Activated CD4-positive, alpha-beta T cell treated with anti-CD3 and anti-CD28 coated beads for 36 hours (primary cell): ENCODE measurements at regions of chr17 and their contacts with region 1.

Region 1: GRCh38 chr17:76271669-76272540 is 6.8 kb downstream of the UBALD2 start:
- DNase-seq: peak; percentile 95
- ATAC-seq: peak; percentile 57
- H3K4me3 Mint-ChIP-seq: peak overlapping the region; percentile 96
- H3K27ac Mint-ChIP-seq: peak overlapping the region; percentile 98
- H3K4me1 Mint-ChIP-seq: peaks cover 70% of the 10 kb centered on the region
- H3K27me3 Mint-ChIP-seq: no peaks in the 10 kb centered on the region

Region 2: GRCh38 chr17:75749545-75750389 is 522.1 kb before region 1 on chr17:
- CTCF ChIA-PET with region 1: no interaction called
- POLR2A ChIA-PET with region 1: no interaction called
- intact Hi-C with region 1: no loop called
- DNase-seq: peak; percentile 95
- ATAC-seq: peak; percentile 75
- H3K4me3 Mint-ChIP-seq: no peak overlapping the region
- H3K27ac Mint-ChIP-seq: no peak overlapping the region
- H3K4me1 Mint-ChIP-seq: peaks cover 18% of the 10 kb centered on the region
- H3K27me3 Mint-ChIP-seq: no peaks in the 10 kb centered on the region

Region 3: DNA sequence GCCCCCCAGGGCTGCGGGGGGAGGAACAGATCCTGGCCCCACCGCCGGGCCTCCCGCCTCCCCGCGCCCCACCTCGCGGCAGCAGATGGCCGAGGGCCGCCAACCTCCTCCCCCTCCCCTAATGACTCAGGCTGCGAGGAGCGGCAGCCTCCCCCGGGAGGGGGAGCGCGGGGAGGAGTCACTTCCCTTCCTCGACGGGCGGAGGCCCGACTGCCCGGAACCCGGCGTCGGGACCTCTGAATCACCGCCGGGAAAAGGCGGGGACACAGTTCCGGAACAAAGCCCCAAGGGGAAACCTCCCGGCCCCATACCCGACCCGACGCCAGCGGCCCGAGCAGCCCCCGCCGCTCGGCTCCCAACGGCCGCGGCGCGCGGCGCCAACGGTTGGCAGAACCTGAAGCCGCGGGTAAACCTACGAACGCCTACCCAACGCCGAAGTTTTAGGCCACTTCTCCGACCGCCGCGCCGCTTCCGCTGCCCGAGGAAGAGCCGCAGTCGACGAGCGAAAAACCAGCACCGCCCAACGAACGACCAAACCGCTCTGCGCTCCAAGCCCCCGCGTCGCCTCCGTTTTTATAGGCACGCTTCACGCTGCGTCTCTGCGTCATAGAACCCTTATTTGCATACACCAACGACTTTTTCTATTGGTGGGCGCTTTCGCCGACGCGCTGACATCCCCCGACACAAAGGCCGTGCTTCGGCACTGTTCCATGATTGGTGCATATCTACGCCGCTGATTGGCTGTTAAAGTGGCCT is 492.5 kb before region 1 on chr17:
- CTCF ChIA-PET with region 1: no interaction called
- POLR2A ChIA-PET with region 1: interaction called, 4 read pairs
- intact Hi-C with region 1: loop called (anchors 2 to 5 kb)
- DNase-seq: peak; percentile 96
- ATAC-seq: peak; percentile 69
- H3K4me3 Mint-ChIP-seq: peak overlapping the region; percentile 98
- H3K27ac Mint-ChIP-seq: peak overlapping the region; percentile 99
- H3K4me1 Mint-ChIP-seq: peaks cover 46% of the 10 kb centered on the region
- H3K27me3 Mint-ChIP-seq: peaks cover 1% of the 10 kb centered on the region

Region 4: DNA sequence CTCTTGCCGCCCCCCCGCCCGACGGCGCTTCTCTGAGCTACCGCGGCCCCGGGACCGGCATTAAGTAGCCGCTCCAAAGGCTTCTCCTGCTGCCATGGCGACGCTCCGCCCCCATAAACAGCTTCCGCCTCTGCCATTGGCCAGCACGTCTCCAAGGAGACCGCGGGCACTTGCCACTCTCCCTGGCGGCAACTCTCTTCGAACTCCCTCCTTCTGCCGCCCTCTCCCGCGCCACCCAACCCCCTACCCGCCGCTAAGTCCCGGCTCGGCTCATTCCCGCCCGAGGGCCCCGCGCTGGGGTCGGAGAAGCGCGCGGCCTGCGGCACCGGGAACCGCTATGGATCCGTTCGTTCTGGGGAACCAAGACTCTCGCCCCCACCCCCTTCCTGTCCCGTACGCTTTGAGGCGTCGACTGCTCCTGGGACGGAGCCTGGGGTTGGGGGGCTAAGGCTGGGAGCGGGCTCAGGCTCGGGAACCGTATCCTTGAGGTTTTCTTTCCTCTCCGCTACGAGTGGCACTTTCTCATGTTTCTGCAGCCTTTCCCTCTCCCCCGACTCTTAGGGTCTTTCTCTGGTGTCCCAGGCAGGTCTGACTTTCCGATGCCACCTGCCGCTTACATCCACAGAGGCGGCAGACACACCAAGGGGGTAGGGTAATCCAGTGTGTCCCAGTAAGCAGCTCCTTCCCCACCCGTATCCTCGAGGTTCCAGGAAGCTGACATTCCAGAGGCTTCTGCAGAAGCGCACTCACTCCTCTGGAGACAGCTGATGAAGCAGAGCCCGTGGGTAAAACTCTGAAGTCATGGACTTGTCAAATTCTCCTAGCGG is 130.5 kb before region 1 on chr17 and contains the start of gene FOXJ1:
- CTCF ChIA-PET with region 1: interaction called, 3 read pairs
- POLR2A ChIA-PET with region 1: interaction called, 3 read pairs
- intact Hi-C with region 1: loop called in 1 of 2 experiments (anchors 1 kb)
- DNase-seq: peak; percentile 93
- ATAC-seq: peak; percentile 80
- H3K4me3 Mint-ChIP-seq: peak within 1 kb of the TSS; percentile 64
- H3K27ac Mint-ChIP-seq: no peak within 1 kb of the TSS
- H3K4me1 Mint-ChIP-seq: peaks cover 51% of the 10 kb centered on the region
- H3K27me3 Mint-ChIP-seq: peaks cover 9% of the 10 kb centered on the region
- total RNA-seq, gene FOXJ1: 0.47 to 0.53 TPM

Region 5: GRCh38 chr17:76191896-76192295 is 80.0 kb before region 1 on chr17:
- CTCF ChIA-PET with region 1: interaction called, 9 read pairs
- POLR2A ChIA-PET with region 1: interaction called, 29 read pairs
- intact Hi-C with region 1: loop called (anchors 1 kb)
- DNase-seq: peak; percentile 63
- ATAC-seq: peak; percentile 79
- H3K4me3 Mint-ChIP-seq: peak overlapping the region; percentile 61
- H3K27ac Mint-ChIP-seq: peak overlapping the region; percentile 96
- H3K4me1 Mint-ChIP-seq: peaks cover 80% of the 10 kb centered on the region
- H3K27me3 Mint-ChIP-seq: no peaks in the 10 kb centered on the region

Region 6: GRCh38 chr17:76240461-76241203 is 31.3 kb before region 1 on chr17 and contains the start of gene RNF157:
- CTCF ChIA-PET with region 1: interaction called, 4 read pairs
- POLR2A ChIA-PET with region 1: interaction called, 28 read pairs
- intact Hi-C with region 1: loop called in 1 of 2 experiments (anchors 1 kb)
- DNase-seq: peak; percentile 73
- ATAC-seq: peak; percentile 84
- H3K4me3 Mint-ChIP-seq: peak within 1 kb of the TSS; percentile 78
- H3K27ac Mint-ChIP-seq: peak within 1 kb of the TSS; percentile 88
- H3K4me1 Mint-ChIP-seq: peaks cover 58% of the 10 kb centered on the region
- H3K27me3 Mint-ChIP-seq: peaks cover 2% of the 10 kb centered on the region
- total RNA-seq, gene RNF157: 24.0 to 39.4 TPM

Region 7: DNA sequence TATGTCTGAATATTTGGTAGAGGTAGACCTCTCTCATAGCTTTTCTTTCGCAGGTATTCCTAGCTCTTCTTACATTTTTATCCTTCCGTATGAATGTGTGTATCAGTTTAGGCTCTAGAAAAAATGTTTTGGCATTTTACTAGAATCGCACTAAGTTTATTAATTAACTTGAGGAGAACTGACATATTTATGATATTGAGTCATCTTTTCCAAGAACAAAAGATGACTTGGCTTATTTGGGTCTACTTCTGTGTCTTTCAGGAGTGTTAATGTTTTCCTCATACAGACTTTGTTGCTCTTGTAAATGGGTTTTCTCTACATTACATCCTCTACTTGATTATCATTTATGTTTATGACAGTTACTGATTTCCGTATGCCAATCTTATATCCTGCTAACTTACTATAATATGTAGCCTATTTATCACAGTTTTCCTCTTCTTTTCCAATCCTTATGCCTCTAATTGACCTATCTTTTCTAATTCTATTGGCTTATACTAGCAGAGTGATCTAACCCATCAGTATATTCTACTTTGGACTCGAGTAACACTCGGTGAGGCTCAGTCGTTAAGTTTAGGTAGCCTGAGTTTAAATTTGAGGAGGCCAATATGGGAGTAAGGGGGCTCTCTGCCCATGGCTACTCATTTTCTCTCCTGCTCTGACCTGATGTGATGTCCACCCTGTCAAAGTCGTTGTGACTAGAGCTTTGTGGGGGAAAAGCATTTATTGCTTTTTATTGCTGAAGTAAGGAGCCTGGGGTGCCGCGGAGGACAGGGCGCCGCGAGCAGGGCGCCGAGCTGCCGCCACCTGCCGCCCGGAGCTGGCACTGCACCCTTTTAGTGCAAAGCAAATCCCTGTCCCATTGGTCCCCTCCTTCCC is 351.6 kb after region 1 on chr17:
- CTCF ChIA-PET with region 1: no interaction called
- POLR2A ChIA-PET with region 1: no interaction called
- intact Hi-C with region 1: no loop called
- DNase-seq: peak; percentile 87
- ATAC-seq: peak; percentile 96
- H3K4me3 Mint-ChIP-seq: no peak overlapping the region
- H3K27ac Mint-ChIP-seq: no peak overlapping the region
- H3K4me1 Mint-ChIP-seq: peaks cover 7% of the 10 kb centered on the region
- H3K27me3 Mint-ChIP-seq: peaks cover 7% of the 10 kb centered on the region